ENCODE measurements at regions of chr3 and their contacts with region 1.

Region 1: DNA sequence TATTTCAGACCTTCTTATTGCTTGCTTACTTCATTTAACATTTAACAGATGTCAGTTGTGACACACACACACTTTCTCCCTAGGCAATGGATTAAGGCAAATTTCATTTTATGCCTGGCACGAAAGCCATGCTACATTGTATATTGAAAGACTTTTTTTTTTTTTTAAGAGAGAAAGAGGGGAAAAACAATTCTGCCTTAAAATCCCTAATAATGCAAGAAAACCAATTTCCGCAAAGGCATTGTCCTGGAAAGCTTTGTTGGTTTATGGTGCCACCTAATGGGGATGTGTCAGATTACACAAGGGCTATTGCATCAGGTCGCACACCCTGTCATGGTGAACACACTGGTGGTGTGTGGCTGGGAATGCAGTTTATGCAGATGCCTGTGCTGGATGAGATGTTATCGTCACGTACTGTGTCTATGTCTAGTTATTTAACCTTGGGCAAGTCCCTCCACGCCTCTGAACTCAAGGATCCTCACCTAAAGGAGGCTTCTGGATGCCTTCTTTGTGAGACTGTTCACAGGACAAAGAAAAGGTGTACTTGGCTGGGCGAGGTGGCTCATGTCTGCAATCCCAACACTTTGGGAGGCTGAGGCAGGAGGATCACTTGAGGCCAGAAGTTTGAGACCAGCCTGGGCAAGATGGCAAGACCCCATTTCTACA is 37.3 kb upstream of the RFTN1 start:
- DNase-seq: peak in 1 of 2 donors; percentile 54
- ATAC-seq: peak; percentile 90
- H3K4me3 ChIP-seq: peak overlapping the region in 1 of 2 donors; percentile 48
- H3K27ac ChIP-seq: no peak overlapping the region
- H3K4me1 ChIP-seq: peaks cover 0 to 3% of the 10 kb centered on the region in 2 donors
- H3K27me3 ChIP-seq: peaks cover 0 to 4% of the 10 kb centered on the region in 2 donors

Region 2: DNA sequence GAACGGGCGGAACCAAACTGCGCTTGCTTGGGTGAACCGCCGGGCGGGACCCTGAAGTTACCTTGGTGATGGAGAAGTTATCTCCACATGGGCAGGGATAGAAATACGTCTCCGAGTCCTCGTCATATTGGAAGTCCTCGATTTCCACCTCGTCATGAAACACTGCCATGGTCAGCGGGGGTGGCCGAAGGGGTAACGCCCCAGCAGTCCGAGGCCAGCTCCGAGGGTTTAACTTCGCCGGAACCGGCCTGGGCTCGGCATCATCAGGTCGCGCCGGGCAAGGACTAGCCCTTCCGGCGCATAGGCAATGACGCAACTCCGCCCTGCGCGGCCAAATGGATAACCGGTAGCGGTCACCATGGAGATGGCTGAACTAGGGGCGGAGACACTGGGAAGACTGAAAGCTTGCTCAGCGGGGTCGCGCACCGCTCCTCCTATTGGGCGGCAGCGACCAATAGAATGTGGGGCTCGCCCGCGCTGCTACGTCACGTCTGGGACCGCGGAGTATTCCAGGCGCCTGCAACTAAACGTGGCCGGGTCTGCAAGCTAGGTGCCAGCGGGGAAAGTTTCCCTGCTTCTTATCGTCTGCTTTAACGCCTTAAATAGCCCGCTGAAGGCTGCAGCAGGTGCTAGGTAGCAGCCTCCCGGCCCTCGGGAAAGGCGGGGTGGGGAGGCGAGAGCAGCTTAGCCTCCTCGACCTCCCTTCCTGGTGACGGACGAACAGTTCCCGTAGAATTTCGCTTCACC is 285.9 kb before region 1 on chr3 and contains the starts of genes DPH3 and OXNAD1:
- intact Hi-C with region 1: loop called (anchors 5 kb)
- DNase-seq: peak; percentile 100
- ATAC-seq: peak; percentile 100
- H3K4me3 ChIP-seq: peak within 1 kb of the TSS; percentile 53 to 81
- H3K27ac ChIP-seq: peak within 1 kb of the TSS; percentile 40 to 97
- H3K4me1 ChIP-seq: peaks cover 0 to 6% of the 10 kb centered on the region in 2 donors
- H3K27me3 ChIP-seq: no peaks in the 10 kb centered on the region
- total RNA-seq, gene DPH3: 19.7 to 31.0 TPM
- total RNA-seq, gene OXNAD1: 7.4 to 10.3 TPM

Region 3: GRCh38 chr3:16290007-16290826 is 260.6 kb before region 1 on chr3:
- intact Hi-C with region 1: loop called (anchors 1 kb)
- DNase-seq: peak in 1 of 2 donors; percentile 51
- ATAC-seq: peak; percentile 77
- H3K4me3 ChIP-seq: no peak overlapping the region
- H3K27ac ChIP-seq: no peak overlapping the region
- H3K4me1 ChIP-seq: no peaks in the 10 kb centered on the region
- H3K27me3 ChIP-seq: no peaks in the 10 kb centered on the region